ENCODE measurements at regions of chr15 and their contacts with region 1.

Region 1: GRCh38 chr15:85785887-85786780 is 8.6 kb downstream of the KLHL25 start:
- DNase-seq: no peak
- ATAC-seq: peak; percentile 81
- H3K4me3 ChIP-seq: 0 out of 4 replicates have a peak overlapping the region, but pooled peaks of 1 of the 2 experiments have one; percentile 23
- H3K27ac ChIP-seq: peak overlapping the region; percentile 60
- H3K4me1 ChIP-seq: peaks cover 21% of the 10 kb centered on the region
- H3K27me3 ChIP-seq: no peaks in the 10 kb centered on the region
- CTCF ChIP-seq: no peak

Region 2: GRCh38 chr15:85168642-85169173 is 617.4 kb before region 1 on chr15:
- CTCF ChIA-PET with region 1: no interaction called
- POLR2A ChIA-PET with region 1: no interaction called
- in situ Hi-C with region 1: no loop called
- intact Hi-C with region 1: no loop called
- DNase-seq: no peak
- ATAC-seq: peak; percentile 85
- H3K4me3 ChIP-seq: peak overlapping the region; percentile 32 to 56
- H3K27ac ChIP-seq: no peak overlapping the region
- H3K4me1 ChIP-seq: no peaks in the 10 kb centered on the region
- H3K27me3 ChIP-seq: no peaks in the 10 kb centered on the region; the same call in 1 of the 2 replicates
- CTCF ChIP-seq: peak; percentile 76

Region 3: GRCh38 chr15:85858586-85859375 is 72.6 kb after region 1 on chr15:
- CTCF ChIA-PET with region 1: interaction called, 11 read pairs
- POLR2A ChIA-PET with region 1: no interaction called
- in situ Hi-C with region 1: no loop called
- intact Hi-C with region 1: no loop called
- DNase-seq: no peak
- ATAC-seq: peak; percentile 96
- H3K4me3 ChIP-seq: no peak overlapping the region
- H3K27ac ChIP-seq: no peak overlapping the region
- H3K4me1 ChIP-seq: no peaks in the 10 kb centered on the region
- H3K27me3 ChIP-seq: peaks cover 5% of the 10 kb centered on the region
- CTCF ChIP-seq: peak; percentile 93